ENCODE measurements at regions of chr11 and their contacts with region 1.

Region 1: GRCh38 chr11:35343033-35343598 is 76.2 kb downstream of the SLC1A2 start:
- DNase-seq: no peak
- ATAC-seq: no peak
- H3K4me3 ChIP-seq: no peak overlapping the region
- H3K27ac ChIP-seq: no peak overlapping the region
- H3K4me1 ChIP-seq: peaks cover 21% of the 10 kb centered on the region
- H3K27me3 ChIP-seq: no peaks in the 10 kb centered on the region
- CTCF ChIP-seq: no peak
- POLR2A ChIP-seq: no peak
- RAD21 ChIP-seq: no peak

Region 2: DNA sequence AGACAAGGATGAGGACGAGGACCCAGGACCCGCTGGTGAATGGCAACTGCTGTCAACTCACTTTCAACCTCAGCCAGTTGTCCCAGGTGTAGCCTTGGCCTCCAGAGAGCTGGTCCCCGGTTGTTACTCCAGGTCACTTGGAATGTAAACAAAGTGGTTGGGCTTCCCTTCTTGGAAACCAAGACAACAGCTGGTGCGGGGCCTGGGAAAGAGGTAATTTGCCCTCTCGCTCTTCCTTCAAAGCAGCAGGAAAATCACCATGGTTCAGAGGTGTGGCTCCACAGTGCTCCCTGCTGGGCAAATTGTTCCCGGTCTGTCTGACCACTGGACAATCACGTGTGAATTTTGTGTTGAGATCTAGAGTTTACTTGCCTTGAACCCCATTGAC is 61.3 kb after region 1 on chr11:
- CTCF ChIA-PET with region 1: no interaction called
- POLR2A ChIA-PET with region 1: no interaction called
- dilution Hi-C with region 1: no loop called
- in situ Hi-C with region 1: no loop called
- intact Hi-C with region 1: loop called (anchors 10 kb)
- DNase-seq: peak; percentile 38
- ATAC-seq: peak; percentile 73
- H3K4me3 ChIP-seq: no peak overlapping the region
- H3K27ac ChIP-seq: no peak overlapping the region
- H3K4me1 ChIP-seq: peaks cover 14% of the 10 kb centered on the region
- H3K27me3 ChIP-seq: no peaks in the 10 kb centered on the region
- CTCF ChIP-seq: peak; percentile 49
- POLR2A ChIP-seq: no peak
- RAD21 ChIP-seq: peak; percentile 58

Region 3: DNA sequence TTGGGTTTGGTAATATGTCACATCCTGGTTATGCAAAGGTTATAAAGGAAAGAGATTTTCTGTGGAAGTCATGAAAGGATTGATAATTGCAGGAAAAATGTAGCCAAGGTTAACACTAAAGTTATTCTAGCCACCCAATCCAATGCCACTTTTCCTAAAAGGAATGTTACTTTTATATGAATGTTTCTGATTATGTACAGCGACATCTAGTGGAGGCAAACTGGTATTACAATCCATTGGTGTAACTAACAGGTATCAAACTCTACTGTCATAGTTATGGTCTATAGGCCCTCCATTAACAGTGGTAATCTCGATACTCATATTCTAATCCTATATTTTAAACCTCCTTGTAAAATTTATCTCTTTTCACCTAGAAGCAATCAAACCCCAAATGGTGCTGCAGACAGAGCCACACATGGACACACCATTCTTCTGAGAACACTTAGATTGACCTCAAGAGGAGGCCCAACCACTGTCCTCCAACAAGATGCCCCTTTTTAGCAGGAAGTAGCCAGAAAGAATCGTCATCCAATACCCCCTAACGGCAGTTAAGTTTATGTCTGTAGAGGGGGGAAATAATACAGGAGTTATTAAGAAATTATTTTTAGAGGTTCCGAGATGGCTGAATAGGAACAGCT is 1329.8 kb after region 1 on chr11:
- CTCF ChIA-PET with region 1: no interaction called
- POLR2A ChIA-PET with region 1: no interaction called
- dilution Hi-C with region 1: no loop called
- in situ Hi-C with region 1: no loop called
- intact Hi-C with region 1: no loop called
- DNase-seq: peak; percentile 58
- ATAC-seq: peak; percentile 82
- H3K4me3 ChIP-seq: no peak overlapping the region
- H3K27ac ChIP-seq: no peak overlapping the region
- H3K4me1 ChIP-seq: no peaks in the 10 kb centered on the region
- H3K27me3 ChIP-seq: no peaks in the 10 kb centered on the region
- CTCF ChIP-seq: peak; percentile 65
- POLR2A ChIP-seq: no peak
- RAD21 ChIP-seq: peak; percentile 44

Measured in IMR-90 (cell line).